Heart right ventricle (tissue), 16 donors: ENCODE measurements at regions of chr7 and their contacts with region 1.

Region 1: GRCh38 chr7:93245525-93246432 is 13.6 kb downstream of the VPS50 start:
- DNase-seq: no peak
- ATAC-seq: no peak
- H3K4me3 ChIP-seq: no peak overlapping the region
- H3K27ac ChIP-seq: no peak overlapping the region
- H3K4me1 ChIP-seq: peaks cover 0 to 7% (median 0%) of the 10 kb centered on the region in 9 donors
- H3K27me3 ChIP-seq: no peaks in the 10 kb centered on the region
- CTCF ChIP-seq: peak; percentile 33 to 73 (median 63)

Region 2: GRCh38 chr7:93551063-93551904 is 305.5 kb after region 1 on chr7:
- intact Hi-C with region 1: loop called in 2 of 10 experiments (anchors 5 to 10 kb)
- DNase-seq: no peak
- ATAC-seq: no peak
- H3K4me3 ChIP-seq: no peak overlapping the region
- H3K27ac ChIP-seq: no peak overlapping the region
- H3K4me1 ChIP-seq: no peaks in the 10 kb centered on the region
- H3K27me3 ChIP-seq: peaks cover 0 to 6% (median 0%) of the 10 kb centered on the region in 7 donors
- CTCF ChIP-seq: peak in 6 of 9 donors; percentile 32 to 52 (median 36)